ENCODE measurements at regions of chr17 and their contacts with region 1.

Region 1: GRCh38 chr17:57855391-57856035 is 5.7 kb upstream of the MRPS23 start:
- DNase-seq: no peak

Region 2: GRCh38 chr17:57911834-57912673 is 56.5 kb after region 1 on chr17:
- in situ Hi-C with region 1: no loop called
- DNase-seq: no peak

Region 3: GRCh38 chr17:57993471-57994365 is 138.2 kb after region 1 on chr17:
- in situ Hi-C with region 1: loop called (anchors 5 kb)
- DNase-seq: no peak

Region 4: DNA sequence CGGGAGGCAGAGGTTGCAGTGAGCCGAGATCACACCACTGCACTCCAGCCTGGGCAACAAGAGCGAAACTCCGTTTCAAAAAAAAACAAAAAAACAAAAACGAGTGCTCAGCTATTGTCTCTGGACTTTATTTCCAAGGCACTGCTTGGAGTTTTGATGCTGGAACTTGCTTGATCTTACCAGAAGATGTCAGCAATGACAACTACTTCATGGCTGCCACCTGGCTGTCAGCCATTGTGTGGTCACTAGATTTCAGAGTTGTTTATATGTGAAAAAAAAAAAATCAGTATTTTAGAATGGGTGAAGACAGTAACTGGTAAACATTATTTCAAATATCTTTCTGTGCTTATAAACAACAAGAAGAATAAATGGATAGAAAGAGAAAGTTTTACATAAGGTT is 266.4 kb after region 1 on chr17:
- in situ Hi-C with region 1: no loop called
- DNase-seq: peak; percentile 57

Measured in ACHN (cell line).